ENCODE measurements at regions of chr10 and their contacts with region 1.

Region 1: GRCh38 chr10:73644015-73644743 is 2.9 kb upstream of the MYOZ1 start:
- DNase-seq: peak in 8 of 9 donors; percentile 33 to 70 (median 60)
- ATAC-seq: peak; percentile 82
- H3K4me3 ChIP-seq: no peak overlapping the region
- H3K4me3 Mint-ChIP-seq: peak overlapping the region in 2 of 10 donors; percentile 34 to 35
- H3K27ac ChIP-seq: no peak overlapping the region
- H3K27ac Mint-ChIP-seq: peak overlapping the region in 5 of 9 donors; percentile 12 to 62 (median 50)
- H3K4me1 ChIP-seq: no peaks in the 10 kb centered on the region
- H3K4me1 Mint-ChIP-seq: peaks cover 0 to 17% (median 6%) of the 10 kb centered on the region in 7 donors
- H3K27me3 ChIP-seq: no peaks in the 10 kb centered on the region
- H3K27me3 Mint-ChIP-seq: peaks cover 0 to 14% (median 11%) of the 10 kb centered on the region in 5 donors

Region 2: DNA sequence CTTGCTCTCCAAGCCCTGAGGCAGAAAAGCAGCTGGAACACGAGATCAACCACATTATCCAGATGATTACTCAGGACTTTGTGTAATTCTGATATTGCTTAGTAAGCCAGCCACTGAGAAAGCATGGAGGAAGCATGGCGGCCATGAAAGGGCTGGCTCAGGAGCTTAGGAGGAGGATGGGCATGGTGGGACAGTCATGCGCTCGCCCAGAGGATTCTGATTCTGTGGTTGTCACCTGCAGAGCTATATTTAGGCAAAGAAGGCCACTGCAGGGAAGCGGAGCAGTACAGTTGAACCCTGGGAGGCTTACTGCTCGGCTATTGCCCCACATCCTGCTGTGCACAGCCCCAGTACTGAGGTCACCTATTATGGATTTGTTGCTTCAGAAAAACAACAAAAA is 1160.7 kb before region 1 on chr10:
- CTCF ChIA-PET with region 1: no interaction called
- POLR2A ChIA-PET with region 1: no interaction called
- intact Hi-C with region 1: no loop called
- DNase-seq: no peak
- ATAC-seq: peak; percentile 46
- H3K4me3 ChIP-seq: no peak overlapping the region
- H3K4me3 Mint-ChIP-seq: no peak overlapping the region
- H3K27ac ChIP-seq: no peak overlapping the region
- H3K27ac Mint-ChIP-seq: no peak overlapping the region
- H3K4me1 ChIP-seq: no peaks in the 10 kb centered on the region
- H3K4me1 Mint-ChIP-seq: no peaks in the 10 kb centered on the region
- H3K27me3 ChIP-seq: no peaks in the 10 kb centered on the region
- H3K27me3 Mint-ChIP-seq: no peaks in the 10 kb centered on the region

Region 3: GRCh38 chr10:73263948-73264347 is 380.2 kb before region 1 on chr10:
- CTCF ChIA-PET with region 1: interaction called, 5 read pairs
- POLR2A ChIA-PET with region 1: no interaction called
- intact Hi-C with region 1: loop called (anchors 1 kb)
- DNase-seq: no peak
- ATAC-seq: no peak
- H3K4me3 ChIP-seq: no peak overlapping the region
- H3K4me3 Mint-ChIP-seq: no peak overlapping the region
- H3K27ac ChIP-seq: no peak overlapping the region
- H3K27ac Mint-ChIP-seq: no peak overlapping the region
- H3K4me1 ChIP-seq: no peaks in the 10 kb centered on the region
- H3K4me1 Mint-ChIP-seq: peaks cover 0 to 8% (median 0%) of the 10 kb centered on the region in 7 donors
- H3K27me3 ChIP-seq: no peaks in the 10 kb centered on the region
- H3K27me3 Mint-ChIP-seq: peaks cover 0 to 13% (median 0%) of the 10 kb centered on the region in 5 donors

Region 4: GRCh38 chr10:73529089-73529832 is 114.9 kb before region 1 on chr10:
- CTCF ChIA-PET with region 1: interaction called, 89 read pairs
- POLR2A ChIA-PET with region 1: no interaction called
- intact Hi-C with region 1: loop called (anchors 1 kb)
- DNase-seq: peak in 8 of 9 donors; percentile 23 to 82 (median 73)
- ATAC-seq: peak; percentile 93
- H3K4me3 ChIP-seq: no peak overlapping the region
- H3K4me3 Mint-ChIP-seq: no peak overlapping the region
- H3K27ac ChIP-seq: no peak overlapping the region
- H3K27ac Mint-ChIP-seq: no peak overlapping the region
- H3K4me1 ChIP-seq: no peaks in the 10 kb centered on the region
- H3K4me1 Mint-ChIP-seq: no peaks in the 10 kb centered on the region
- H3K27me3 ChIP-seq: no peaks in the 10 kb centered on the region
- H3K27me3 Mint-ChIP-seq: peaks cover 0 to 2% (median 0%) of the 10 kb centered on the region in 5 donors

Region 5: DNA sequence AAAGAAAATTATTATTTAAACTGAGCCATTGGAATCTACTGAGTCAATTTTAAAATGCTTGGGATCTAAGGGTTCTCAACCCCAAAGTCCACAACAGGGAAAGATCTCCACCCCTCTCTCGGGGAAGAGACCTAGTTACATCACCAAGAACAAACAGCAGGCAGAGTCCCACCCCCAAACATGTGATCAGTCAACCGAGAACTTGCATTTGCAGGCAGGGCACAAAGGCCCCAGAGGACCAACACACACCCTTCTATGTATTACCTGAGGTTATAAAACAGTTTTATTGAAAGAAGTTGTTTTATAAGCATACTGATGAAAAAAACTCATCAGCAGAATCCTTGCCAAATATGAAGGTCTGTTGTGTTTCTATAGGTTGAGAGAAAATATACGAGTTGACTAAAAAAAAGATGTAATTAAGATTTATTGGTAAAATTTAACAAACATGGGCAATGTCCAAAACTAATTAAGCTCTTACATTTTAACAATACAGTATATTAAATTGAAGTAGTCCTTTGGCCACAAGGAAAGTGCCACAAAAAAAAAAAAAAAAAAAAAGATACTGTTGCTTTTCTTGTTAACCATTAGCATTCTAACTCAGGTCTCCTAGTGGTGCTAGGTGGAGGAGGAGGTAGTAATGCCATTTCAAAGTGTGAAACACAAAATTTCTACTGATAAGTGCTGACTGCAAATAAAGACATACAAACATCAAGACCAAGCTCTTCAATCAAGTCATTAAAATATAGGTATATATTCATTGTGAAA is 52.1 kb before region 1 on chr10:
- CTCF ChIA-PET with region 1: no interaction called
- POLR2A ChIA-PET with region 1: interaction called, 3 read pairs
- intact Hi-C with region 1: loop called in 1 of 2 experiments (anchors 5 kb)
- DNase-seq: peak in 4 of 9 donors; percentile 6 to 28 (median 14)
- ATAC-seq: peak; percentile 66
- H3K4me3 ChIP-seq: no peak overlapping the region
- H3K4me3 Mint-ChIP-seq: peak overlapping the region; percentile 34 to 84 (median 70)
- H3K27ac ChIP-seq: peak overlapping the region; percentile 31
- H3K27ac Mint-ChIP-seq: peak overlapping the region; percentile 58 to 84 (median 78)
- H3K4me1 ChIP-seq: peaks cover 0 to 17% of the 10 kb centered on the region in 2 donors
- H3K4me1 Mint-ChIP-seq: peaks cover 12 to 32% (median 27%) of the 10 kb centered on the region in 7 donors
- H3K27me3 ChIP-seq: no peaks in the 10 kb centered on the region
- H3K27me3 Mint-ChIP-seq: no peaks in the 10 kb centered on the region

Region 6: DNA sequence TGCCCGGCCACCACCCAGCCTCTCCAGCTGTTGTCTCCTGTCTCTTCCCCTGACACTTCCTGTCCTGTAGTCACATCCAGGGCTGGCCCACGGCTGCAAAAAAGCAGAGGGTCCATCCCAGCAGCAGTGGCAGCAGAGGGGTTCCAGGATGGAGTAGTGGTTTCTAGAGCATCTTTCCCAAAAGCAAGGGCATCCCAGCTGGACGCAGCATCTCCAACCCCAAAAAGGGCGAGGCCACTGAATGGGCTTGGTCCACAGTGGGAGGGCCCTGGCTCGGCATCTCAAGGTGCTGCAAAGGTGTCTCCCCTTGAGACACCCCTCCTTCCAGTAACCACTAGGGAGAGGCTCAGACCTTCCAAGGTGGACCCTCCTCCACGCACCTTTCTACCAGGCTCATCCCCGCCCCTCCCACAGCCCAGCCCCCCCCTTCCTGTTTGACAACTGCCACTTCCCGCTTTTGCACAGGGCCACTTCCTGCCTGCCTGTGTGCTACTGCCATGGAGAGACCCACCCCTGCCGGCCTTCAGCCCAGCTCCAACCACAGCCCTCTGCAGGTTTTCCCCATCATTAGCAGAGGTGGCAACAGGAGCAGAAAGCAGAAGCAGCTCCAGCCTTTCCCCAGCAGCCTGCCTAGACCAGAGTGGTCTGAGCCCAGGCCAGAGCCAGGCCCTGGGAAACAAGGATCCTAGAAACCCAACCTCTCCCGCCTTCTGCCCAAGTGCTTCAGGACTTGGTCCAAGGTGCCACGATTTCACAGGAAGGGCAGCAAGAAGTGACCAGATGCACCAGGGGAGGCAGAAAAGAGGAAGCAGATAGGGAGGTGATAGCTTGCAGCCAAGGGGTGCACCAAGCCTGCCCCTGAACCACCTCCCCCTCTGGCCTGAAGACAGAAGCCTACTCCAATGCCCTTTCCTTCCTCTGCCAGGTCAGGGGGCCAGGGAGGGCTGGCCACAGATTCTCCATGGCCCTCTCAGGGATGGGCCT is 221.6 kb after region 1 on chr10:
- CTCF ChIA-PET with region 1: no interaction called
- POLR2A ChIA-PET with region 1: no interaction called
- intact Hi-C with region 1: no loop called
- DNase-seq: peak; percentile 18 to 50 (median 47)
- ATAC-seq: peak; percentile 90
- H3K4me3 ChIP-seq: peak overlapping the region; percentile 60
- H3K4me3 Mint-ChIP-seq: peak overlapping the region; percentile 79 to 92 (median 87)
- H3K27ac ChIP-seq: peak overlapping the region; percentile 67
- H3K27ac Mint-ChIP-seq: peak overlapping the region; percentile 88 to 97 (median 96)
- H3K4me1 ChIP-seq: peaks cover 28 to 72% of the 10 kb centered on the region in 2 donors
- H3K4me1 Mint-ChIP-seq: peaks cover 56 to 92% (median 88%) of the 10 kb centered on the region in 7 donors
- H3K27me3 ChIP-seq: no peaks in the 10 kb centered on the region
- H3K27me3 Mint-ChIP-seq: no peaks in the 10 kb centered on the region

Measured in naive thymus-derived CD4-positive, alpha-beta T cell (primary cell).